Pancreas (tissue), 10 donors: ENCODE measurements at regions of chr5 and their contacts with region 1.

Region 1: DNA sequence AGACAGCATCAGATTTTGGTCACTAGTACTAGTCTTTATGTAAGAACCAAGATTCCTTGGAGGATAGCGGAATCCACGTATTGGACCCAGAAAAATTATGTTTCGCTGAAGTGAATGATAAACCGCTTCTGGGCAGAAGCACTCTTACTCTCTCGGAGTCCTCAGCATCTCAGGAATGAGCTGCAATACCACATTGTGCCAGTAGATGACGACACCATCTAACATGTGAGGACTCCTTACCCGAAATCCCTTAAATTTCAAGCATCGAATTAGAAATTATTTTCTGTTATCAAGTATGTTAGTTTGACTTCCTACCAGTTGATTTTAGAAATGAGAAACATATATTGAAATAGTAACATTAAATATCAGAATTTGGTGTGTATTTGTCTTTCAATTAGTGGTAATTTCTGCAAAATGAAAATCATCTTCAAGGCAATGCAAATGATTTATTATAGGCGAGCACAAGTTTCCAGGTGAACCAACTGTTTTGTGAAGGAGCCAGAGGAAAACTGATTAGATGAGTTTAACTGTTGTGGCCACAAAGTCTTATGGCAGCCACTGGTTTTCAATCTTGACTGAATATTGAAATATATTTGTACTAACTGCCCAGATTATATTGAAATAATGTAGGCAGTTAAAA is 66.0 kb upstream of the CAMK4 start:
- DNase-seq: peak in 4 of 6 donors; percentile 23 to 72 (median 34)
- ATAC-seq: peak in 3 of 4 donors; percentile 86 to 91 (median 90)
- H3K4me3 ChIP-seq: no peak overlapping the region
- H3K27ac ChIP-seq: no peak overlapping the region
- H3K4me1 ChIP-seq: no peaks in the 10 kb centered on the region
- H3K27me3 ChIP-seq: no peaks in the 10 kb centered on the region
- CTCF ChIP-seq: peak; percentile 94 to 99 (median 97)

Region 2: DNA sequence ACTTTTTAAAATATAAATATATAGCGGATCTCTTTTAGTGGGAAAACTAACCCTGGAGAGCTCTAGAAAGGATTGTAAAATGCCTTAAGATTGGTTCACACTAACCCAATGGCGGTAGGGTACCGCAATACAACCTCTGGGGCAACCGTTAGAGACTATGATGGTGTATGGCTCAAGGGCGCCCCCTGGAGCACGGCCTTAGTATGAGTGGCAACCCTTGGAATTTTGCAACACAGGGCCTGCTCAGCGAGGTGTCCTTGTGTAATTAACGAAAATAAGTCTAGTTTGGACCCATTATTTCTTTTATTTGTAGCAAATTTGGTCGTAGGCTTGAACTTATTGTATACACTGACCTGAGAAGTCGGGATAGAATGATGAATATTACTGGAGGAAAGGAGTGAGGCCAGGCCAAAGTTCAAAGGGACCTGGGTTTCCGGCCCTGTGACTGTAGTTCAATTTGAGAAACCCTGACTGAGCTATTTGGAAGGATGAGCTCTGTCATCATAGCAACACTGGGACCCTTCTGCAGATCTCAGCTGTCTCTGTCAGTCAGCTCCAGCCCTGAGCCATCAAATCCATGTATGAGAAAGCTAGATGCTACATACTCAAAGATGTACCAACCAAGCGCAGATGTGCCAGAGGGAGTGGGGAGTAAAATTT is 120.8 kb after region 1 on chr5:
- intact Hi-C with region 1: loop called in 1 of 3 experiments (anchors 5 kb)
- DNase-seq: peak; percentile 18 to 83 (median 44)
- ATAC-seq: peak; percentile 56 to 91 (median 83)
- H3K4me3 ChIP-seq: no peak overlapping the region
- H3K27ac ChIP-seq: no peak overlapping the region
- H3K4me1 ChIP-seq: no peaks in the 10 kb centered on the region
- H3K27me3 ChIP-seq: no peaks in the 10 kb centered on the region
- CTCF ChIP-seq: peak; percentile 31 to 59 (median 52)

Region 3: DNA sequence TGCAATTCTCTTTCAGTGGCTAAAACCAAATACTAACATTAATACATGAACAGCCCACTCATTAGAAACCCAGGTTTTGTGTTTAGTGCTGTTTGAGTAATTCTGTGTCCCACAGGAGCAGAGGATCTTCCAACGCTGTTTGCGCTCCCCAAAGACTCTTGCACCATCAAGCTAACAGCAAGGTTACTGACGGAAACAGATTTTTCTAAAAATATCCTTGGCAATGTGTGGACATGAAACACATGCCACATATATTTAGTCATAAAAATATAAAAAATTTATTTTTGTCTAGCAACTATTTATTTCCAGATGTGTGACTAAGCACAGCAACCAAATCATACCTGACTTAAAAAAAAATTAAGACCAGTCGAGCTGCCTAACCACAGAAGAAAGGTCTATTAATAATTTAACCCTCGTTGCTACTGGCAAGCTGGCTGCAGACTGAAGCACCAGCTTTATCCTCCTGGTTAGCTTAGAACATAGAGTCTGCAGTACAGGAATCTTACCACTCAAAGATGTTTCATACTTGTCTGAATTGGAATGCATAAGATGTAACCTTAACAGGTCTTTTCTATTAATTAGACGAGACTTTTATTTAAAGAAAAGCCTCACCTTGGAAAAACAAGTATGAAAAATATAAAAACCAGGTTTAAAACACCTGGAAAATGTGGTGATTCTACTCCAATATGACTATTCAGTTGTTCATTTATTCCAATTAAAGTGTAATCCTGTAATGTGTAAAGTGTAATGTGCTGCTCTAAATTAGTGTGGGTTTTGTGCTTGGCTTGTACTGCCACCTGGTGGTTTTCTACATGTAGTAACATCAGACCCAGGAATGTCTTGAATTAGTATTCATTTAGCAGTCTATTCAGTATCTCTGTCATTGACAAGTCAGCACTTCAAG is 988.4 kb after region 1 on chr5:
- intact Hi-C with region 1: loop called in 1 of 3 experiments (anchors 10 kb)
- DNase-seq: peak in 3 of 6 donors; percentile 30 to 60 (median 48)
- ATAC-seq: peak; percentile 89 to 98 (median 96)
- H3K4me3 ChIP-seq: no peak overlapping the region
- H3K27ac ChIP-seq: no peak overlapping the region
- H3K4me1 ChIP-seq: peaks cover 0 to 4% (median 0%) of the 10 kb centered on the region in 3 donors
- H3K27me3 ChIP-seq: no peaks in the 10 kb centered on the region
- CTCF ChIP-seq: peak; percentile 47 to 80 (median 65)